Calu3 (cell line): ENCODE measurements at regions of chr6 and their contacts with region 1.

Region 1: DNA sequence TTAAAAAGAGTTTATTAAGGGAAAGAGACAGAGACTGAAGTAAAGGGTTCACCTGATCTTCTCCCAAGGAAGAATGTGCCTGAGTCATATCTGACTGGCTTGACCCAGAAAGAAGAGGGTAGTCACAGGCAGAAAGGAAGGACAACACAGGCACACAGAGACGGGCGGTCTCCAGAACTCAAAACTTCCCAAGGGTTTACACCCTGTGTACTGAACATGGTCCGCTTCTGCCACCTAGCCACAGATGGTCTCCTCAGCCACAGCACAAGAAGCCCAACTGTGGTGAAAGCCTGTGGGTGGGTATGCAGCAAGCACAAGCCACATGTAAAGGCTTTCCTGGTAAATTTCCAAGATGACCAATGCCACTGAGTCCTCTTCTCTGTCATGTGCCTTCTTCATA is 17.2 kb downstream of the UNC5CL start:
- DNase-seq: peak; percentile 44
- H3K4me3 Mint-ChIP-seq: no peak overlapping the region
- H3K27ac Mint-ChIP-seq: no peak overlapping the region
- H3K4me1 Mint-ChIP-seq: peaks cover 7% of the 10 kb centered on the region
- H3K27me3 Mint-ChIP-seq: no peaks in the 10 kb centered on the region
- CTCF ChIP-seq: no peak

Region 2: GRCh38 chr6:40894962-40895799 is 126.7 kb before region 1 on chr6:
- CTCF ChIA-PET with region 1: no interaction called
- intact Hi-C with region 1: loop called (anchors 2 kb)
- DNase-seq: peak; percentile 74
- H3K4me3 Mint-ChIP-seq: no peak overlapping the region
- H3K27ac Mint-ChIP-seq: no peak overlapping the region
- H3K4me1 Mint-ChIP-seq: no peaks in the 10 kb centered on the region
- H3K27me3 Mint-ChIP-seq: peaks cover 30% of the 10 kb centered on the region
- CTCF ChIP-seq: peak; percentile 71

Region 3: DNA sequence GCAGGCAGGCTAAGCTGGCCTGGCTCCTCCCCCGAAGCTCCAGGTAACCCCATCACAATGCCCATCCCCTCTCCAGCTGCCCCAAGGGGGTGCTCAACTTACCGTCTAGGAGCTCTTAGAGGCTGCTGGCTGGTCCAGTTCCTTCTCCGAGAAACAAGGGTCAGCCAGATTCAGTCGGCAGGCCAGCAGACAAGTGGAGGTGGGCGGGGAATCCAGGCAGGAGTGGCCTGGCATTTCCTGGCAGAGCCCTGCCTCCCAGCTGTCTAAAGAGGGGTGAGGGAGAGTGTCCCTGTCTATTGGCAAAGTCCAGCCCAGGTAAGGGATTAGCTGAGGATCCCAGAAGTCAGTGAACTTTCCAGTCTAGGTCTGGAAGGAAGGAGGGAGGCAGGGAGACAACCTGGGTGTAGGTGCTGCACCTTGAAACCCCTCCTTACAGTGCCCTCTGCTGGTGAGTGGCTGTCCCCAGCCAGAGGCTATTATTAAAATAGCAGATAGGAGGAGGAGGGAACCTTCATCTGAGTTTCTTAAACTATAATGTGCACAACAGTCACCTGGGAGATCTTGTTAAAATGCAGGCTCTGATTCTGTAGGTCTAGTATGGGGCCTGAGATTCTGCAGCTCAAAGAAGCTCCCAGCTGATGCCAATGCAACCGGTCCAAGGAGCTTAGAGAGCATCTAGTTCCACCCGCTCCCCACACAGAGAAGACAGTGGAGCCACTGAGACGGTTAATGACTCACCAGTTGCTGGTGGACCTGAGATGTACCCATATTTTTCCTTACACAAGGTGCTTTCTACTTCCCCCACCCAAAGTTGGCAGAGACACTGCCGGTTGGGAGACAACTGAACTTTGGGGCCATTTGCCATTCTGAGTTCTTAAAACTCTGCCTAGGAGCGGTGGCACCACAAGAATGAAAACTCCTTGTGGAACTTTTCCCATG is 17.5 kb after region 1 on chr6 and contains the start of gene UNC5CL:
- CTCF ChIA-PET with region 1: no interaction called
- intact Hi-C with region 1: no loop called
- DNase-seq: peak; percentile 91
- H3K4me3 Mint-ChIP-seq: peak within 1 kb of the TSS; percentile 73
- H3K27ac Mint-ChIP-seq: peak within 1 kb of the TSS; percentile 90
- H3K4me1 Mint-ChIP-seq: peaks cover 58% of the 10 kb centered on the region
- H3K27me3 Mint-ChIP-seq: no peaks in the 10 kb centered on the region
- CTCF ChIP-seq: peak; percentile 76
- total RNA-seq, gene UNC5CL: 10.6 and 15.9 TPM in 2 replicates